ENCODE measurements at regions of chr20 and their contacts with region 1.

Region 1: DNA sequence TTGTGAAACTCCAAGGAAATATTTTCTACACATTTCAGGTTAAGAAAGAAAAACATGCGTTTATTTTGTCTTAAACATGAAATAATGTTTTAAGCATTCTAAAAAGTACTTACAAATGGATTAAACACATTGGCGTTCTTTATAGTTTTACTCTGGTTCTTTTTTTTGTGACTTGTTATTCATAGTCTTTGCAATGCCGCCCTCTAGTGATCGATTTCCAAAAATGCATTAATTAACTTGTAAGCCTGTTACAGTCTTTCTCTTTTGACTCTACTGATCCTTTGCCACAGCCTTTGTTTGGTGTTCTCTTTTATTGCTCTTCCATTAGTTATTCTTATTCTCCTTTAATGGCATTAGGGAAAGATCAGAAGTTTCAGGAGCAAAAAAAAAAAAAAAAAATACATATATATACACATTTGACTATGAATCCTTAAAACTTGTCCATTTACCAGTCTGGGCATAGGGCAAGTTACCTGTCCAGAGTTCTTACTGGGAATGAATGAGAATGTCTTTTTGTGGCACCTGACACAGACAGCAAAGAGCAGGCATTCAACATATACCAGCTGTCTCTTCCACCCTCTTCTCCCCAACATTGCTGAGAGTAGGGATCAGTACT is 59.9 kb downstream of the MACROD2 start:
- DNase-seq: peak in 5 of 9 donors; percentile 2 to 28 (median 11)
- ATAC-seq: no peak
- H3K4me3 ChIP-seq: no peak overlapping the region
- H3K4me3 Mint-ChIP-seq: no peak overlapping the region
- H3K27ac ChIP-seq: no peak overlapping the region
- H3K27ac Mint-ChIP-seq: no peak overlapping the region
- H3K4me1 ChIP-seq: no peaks in the 10 kb centered on the region
- H3K4me1 Mint-ChIP-seq: peaks cover 0 to 2% (median 0%) of the 10 kb centered on the region in 7 donors
- H3K27me3 ChIP-seq: no peaks in the 10 kb centered on the region
- H3K27me3 Mint-ChIP-seq: peaks cover 0 to 4% (median 0%) of the 10 kb centered on the region in 5 donors

Region 2: GRCh38 chr20:13819885-13820645 is 235.2 kb before region 1 on chr20:
- CTCF ChIA-PET with region 1: interaction called, 3 read pairs
- POLR2A ChIA-PET with region 1: no interaction called
- intact Hi-C with region 1: loop called in 1 of 2 experiments (anchors 1 kb)
- DNase-seq: peak in 5 of 9 donors; percentile 18 to 36 (median 24)
- ATAC-seq: peak; percentile 71
- H3K4me3 ChIP-seq: no peak overlapping the region
- H3K4me3 Mint-ChIP-seq: no peak overlapping the region
- H3K27ac ChIP-seq: peak overlapping the region; percentile 8
- H3K27ac Mint-ChIP-seq: no peak overlapping the region
- H3K4me1 ChIP-seq: no peaks in the 10 kb centered on the region
- H3K4me1 Mint-ChIP-seq: peaks cover 0 to 3% (median 0%) of the 10 kb centered on the region in 7 donors
- H3K27me3 ChIP-seq: no peaks in the 10 kb centered on the region
- H3K27me3 Mint-ChIP-seq: no peaks in the 10 kb centered on the region

Region 3: DNA sequence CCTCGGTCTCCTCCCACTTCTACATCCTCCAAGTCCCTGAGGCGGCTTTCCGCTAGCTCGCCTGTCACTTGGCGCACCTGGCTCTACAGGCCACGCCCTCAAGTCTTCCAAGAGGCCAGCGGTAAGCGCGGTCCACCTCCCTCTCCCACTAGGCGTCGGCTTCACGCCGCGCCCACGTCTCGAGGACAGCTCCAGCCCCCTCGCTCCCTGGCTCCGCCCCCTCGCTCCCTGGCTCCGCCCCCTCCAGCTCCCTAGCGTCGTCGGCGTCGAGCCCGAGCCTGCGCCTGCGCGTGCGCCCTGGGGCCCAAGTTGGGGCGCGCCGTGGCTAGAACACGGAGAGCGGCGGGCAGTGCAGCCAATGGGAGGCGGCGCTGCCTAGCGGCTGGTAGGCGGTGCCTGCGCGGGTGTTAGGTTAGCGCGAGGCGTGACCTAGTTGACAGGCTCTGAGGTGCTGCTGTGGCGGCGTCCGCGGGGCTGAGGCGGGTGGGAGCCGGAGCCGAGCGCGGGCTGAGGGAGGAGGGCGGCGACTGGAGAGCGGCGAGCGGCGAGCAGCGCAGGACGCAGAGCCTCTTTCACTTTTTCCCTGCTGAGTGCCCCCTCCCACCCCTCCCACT is 60.0 kb before region 1 on chr20 and contains the start of gene MACROD2:
- CTCF ChIA-PET with region 1: no interaction called
- POLR2A ChIA-PET with region 1: no interaction called
- intact Hi-C with region 1: loop called in 1 of 2 experiments (anchors 10 kb)
- DNase-seq: peak in 6 of 9 donors; percentile 1 to 50 (median 19)
- ATAC-seq: peak; percentile 88
- H3K4me3 ChIP-seq: no peak within 1 kb of the TSS
- H3K4me3 Mint-ChIP-seq: peak within 1 kb of the TSS; percentile 50 to 82 (median 70)
- H3K27ac ChIP-seq: no peak within 1 kb of the TSS
- H3K27ac Mint-ChIP-seq: no peak within 1 kb of the TSS
- H3K4me1 ChIP-seq: no peaks in the 10 kb centered on the region
- H3K4me1 Mint-ChIP-seq: peaks cover 3 to 9% (median 8%) of the 10 kb centered on the region in 7 donors
- H3K27me3 ChIP-seq: no peaks in the 10 kb centered on the region
- H3K27me3 Mint-ChIP-seq: peaks cover 14 to 40% (median 29%) of the 10 kb centered on the region in 5 donors
- total RNA-seq, gene MACROD2: 0.27 to 0.86 (median 0.34) TPM in 3 of 5 experiments, not detected in the others